Activated naive CD4-positive, alpha-beta T cell treated with anti-CD3 and anti-CD28 coated beads, Interleukin-2, amount 10 ng/mL, durations not matched to agents 7 days and 5 days (primary cell): ENCODE measurements at regions of chr19 and their contacts with region 1.

Region 1: GRCh38 chr19:51660975-51661600 is 14.5 kb upstream of the SIGLEC14 start:
- DNase-seq: peak; percentile 75
- H3K4me3 Mint-ChIP-seq: no peak overlapping the region
- H3K27ac Mint-ChIP-seq: no peak overlapping the region
- H3K4me1 Mint-ChIP-seq: peaks cover 5% of the 10 kb centered on the region
- H3K27me3 Mint-ChIP-seq: peaks cover 18% of the 10 kb centered on the region

Region 2: GRCh38 chr19:51607920-51608562 is 53.0 kb before region 1 on chr19:
- CTCF ChIA-PET with region 1: interaction called, 13 read pairs
- DNase-seq: peak; percentile 85
- H3K4me3 Mint-ChIP-seq: no peak overlapping the region
- H3K27ac Mint-ChIP-seq: no peak overlapping the region
- H3K4me1 Mint-ChIP-seq: peaks cover 8% of the 10 kb centered on the region
- H3K27me3 Mint-ChIP-seq: peaks cover 8% of the 10 kb centered on the region

Region 3: GRCh38 chr19:51676566-51677083 is 15.5 kb after region 1 on chr19:
- CTCF ChIA-PET with region 1: interaction called, 13 read pairs
- DNase-seq: no peak
- H3K4me3 Mint-ChIP-seq: no peak overlapping the region
- H3K27ac Mint-ChIP-seq: peak overlapping the region; percentile 45
- H3K4me1 Mint-ChIP-seq: peaks cover 7% of the 10 kb centered on the region
- H3K27me3 Mint-ChIP-seq: peaks cover 4% of the 10 kb centered on the region